ENCODE measurements at regions of chr14 and their contacts with region 1.

Region 1: DNA sequence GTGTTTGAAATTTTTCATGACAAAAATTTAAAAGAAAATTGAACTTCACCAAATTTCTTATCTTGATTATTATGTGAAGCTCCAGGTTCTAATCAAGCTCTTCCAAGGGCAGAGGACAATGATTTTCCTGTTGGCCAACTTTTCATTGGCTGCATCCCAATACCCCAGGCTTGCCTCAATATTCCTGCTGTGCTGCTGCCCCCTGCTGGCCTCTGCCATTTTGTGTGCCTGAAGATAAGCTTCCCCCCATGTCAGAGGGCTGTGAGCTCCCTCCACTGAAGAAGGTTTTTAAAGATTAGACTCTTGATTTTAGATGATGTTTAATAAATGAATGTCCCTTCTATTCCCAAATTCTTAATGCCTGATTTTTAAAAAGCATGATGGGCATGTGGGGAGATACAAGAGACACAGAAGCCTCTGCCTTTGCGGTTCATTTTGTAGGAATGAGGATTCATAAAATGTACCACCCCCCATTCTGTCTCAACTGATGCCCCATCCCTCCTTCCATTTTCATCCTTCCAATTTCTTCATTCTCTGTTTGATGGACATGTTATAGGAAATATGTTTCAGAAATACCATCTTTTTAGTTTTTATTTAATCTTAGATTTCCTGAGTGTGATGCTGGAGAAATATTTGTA is 76.7 kb upstream of the RGS6 start:
- DNase-seq: peak; percentile 89
- ATAC-seq: peak; percentile 90
- H3K4me3 ChIP-seq: no peak overlapping the region
- H3K27ac ChIP-seq: no peak overlapping the region
- H3K4me1 ChIP-seq: no peaks in the 10 kb centered on the region
- H3K27me3 ChIP-seq: no peaks in the 10 kb centered on the region; the same call in 1 of the 2 replicates
- CTCF ChIP-seq: peak; percentile 96

Region 2: DNA sequence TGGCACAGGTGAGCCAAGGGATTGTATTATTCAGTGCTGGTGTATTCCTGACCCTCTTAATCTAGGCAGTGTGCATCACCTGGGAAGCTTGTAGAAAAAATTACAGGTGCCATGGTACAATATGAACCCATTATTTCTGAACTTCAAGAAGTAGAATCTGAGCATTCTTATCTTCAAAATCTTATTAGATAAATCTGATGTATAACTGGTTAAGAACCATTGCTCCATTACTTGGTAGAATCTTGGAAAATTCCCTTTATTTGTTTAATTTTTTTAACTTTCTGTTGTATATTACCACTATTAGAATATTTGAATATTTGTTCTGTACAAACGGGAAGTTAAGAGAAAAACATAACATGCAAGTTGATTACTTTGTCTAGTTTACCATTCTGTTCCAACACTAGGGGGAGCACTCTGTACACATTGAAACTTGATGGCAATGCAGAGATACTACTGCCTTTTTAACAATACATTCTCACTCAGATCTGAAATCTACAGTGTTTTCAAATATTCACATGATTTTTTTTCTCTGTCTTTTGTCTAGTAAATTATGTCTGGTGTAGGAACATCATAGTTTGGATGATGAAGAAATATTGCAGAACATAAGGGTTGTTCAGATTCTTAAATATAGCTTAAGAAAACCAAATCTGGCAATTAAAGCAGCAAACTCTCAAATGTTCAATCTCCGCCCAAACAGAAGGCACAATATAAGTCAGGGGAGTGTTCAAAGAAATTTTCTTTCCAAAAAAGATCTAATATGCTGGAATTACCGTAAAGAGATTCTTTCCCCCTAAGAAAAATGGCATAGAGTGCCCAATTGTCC is 751.6 kb before region 1 on chr14:
- CTCF ChIA-PET with region 1: interaction called, 3 read pairs
- POLR2A ChIA-PET with region 1: no interaction called
- intact Hi-C with region 1: loop called (anchors 2 kb)
- DNase-seq: peak; percentile 78
- ATAC-seq: peak; percentile 89
- H3K4me3 ChIP-seq: no peak overlapping the region
- H3K27ac ChIP-seq: no peak overlapping the region
- H3K4me1 ChIP-seq: peaks cover 7% of the 10 kb centered on the region; the same call in 1 of the 2 replicates
- H3K27me3 ChIP-seq: no peaks in the 10 kb centered on the region
- CTCF ChIP-seq: peak; percentile 96

Region 3: GRCh38 chr14:71651228-71651627 is 204.3 kb before region 1 on chr14:
- CTCF ChIA-PET with region 1: interaction called, 10 read pairs
- POLR2A ChIA-PET with region 1: no interaction called
- intact Hi-C with region 1: no loop called
- DNase-seq: peak; percentile 73
- ATAC-seq: peak; percentile 60
- H3K4me3 ChIP-seq: no peak overlapping the region
- H3K27ac ChIP-seq: peak overlapping the region; percentile 31
- H3K4me1 ChIP-seq: peaks cover 50% of the 10 kb centered on the region
- H3K27me3 ChIP-seq: no peaks in the 10 kb centered on the region
- CTCF ChIP-seq: no peak

Region 4: GRCh38 chr14:71720978-71721624 is 134.4 kb before region 1 on chr14:
- CTCF ChIA-PET with region 1: interaction called, 7 read pairs
- POLR2A ChIA-PET with region 1: no interaction called
- intact Hi-C with region 1: loop called (anchors 1 kb)
- DNase-seq: peak; percentile 74
- ATAC-seq: peak; percentile 88
- H3K4me3 ChIP-seq: no peak overlapping the region
- H3K27ac ChIP-seq: no peak overlapping the region
- H3K4me1 ChIP-seq: no peaks in the 10 kb centered on the region
- H3K27me3 ChIP-seq: no peaks in the 10 kb centered on the region
- CTCF ChIP-seq: peak; percentile 86

Region 5: GRCh38 chr14:71753126-71753830 is 102.2 kb before region 1 on chr14:
- CTCF ChIA-PET with region 1: interaction called, 13 read pairs
- POLR2A ChIA-PET with region 1: no interaction called
- intact Hi-C with region 1: loop called (anchors 1 kb)
- DNase-seq: peak; percentile 94
- ATAC-seq: peak; percentile 85
- H3K4me3 ChIP-seq: peak overlapping the region; percentile 46; the same call in 1 of the 2 replicates
- H3K27ac ChIP-seq: no peak overlapping the region
- H3K4me1 ChIP-seq: peaks cover 5% of the 10 kb centered on the region
- H3K27me3 ChIP-seq: no peaks in the 10 kb centered on the region
- CTCF ChIP-seq: peak; percentile 98

Region 6: GRCh38 chr14:71803524-71804260 is 51.8 kb before region 1 on chr14:
- CTCF ChIA-PET with region 1: interaction called, 13 read pairs
- POLR2A ChIA-PET with region 1: no interaction called
- intact Hi-C with region 1: loop called (anchors 2 kb)
- DNase-seq: peak; percentile 92
- ATAC-seq: peak; percentile 85
- H3K4me3 ChIP-seq: no peak overlapping the region
- H3K27ac ChIP-seq: peak overlapping the region; percentile 37
- H3K4me1 ChIP-seq: peaks cover 17% of the 10 kb centered on the region
- H3K27me3 ChIP-seq: peaks cover 11% of the 10 kb centered on the region
- CTCF ChIP-seq: no peak